ENCODE measurements at regions of chr1 and their contacts with region 1.

Region 1: DNA sequence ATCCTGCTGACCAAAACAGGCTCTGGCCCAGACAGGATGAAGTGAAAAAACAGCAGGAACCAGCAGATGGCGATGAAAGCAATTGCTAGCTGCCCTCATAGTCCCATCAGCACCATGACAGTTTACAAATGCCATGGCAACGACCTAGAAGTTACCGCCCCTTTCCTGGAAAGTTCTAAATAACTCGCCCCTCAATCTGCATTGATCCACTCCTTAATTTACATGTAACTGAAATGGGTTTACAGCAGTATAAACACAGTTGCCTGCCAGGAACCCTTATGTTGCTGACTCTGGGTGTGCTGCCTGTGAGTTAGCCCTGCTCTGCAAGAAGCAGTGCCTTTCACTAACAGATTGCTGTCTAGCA is 65.5 kb upstream of the CR1L start:
- DNase-seq: peak; percentile 67
- ATAC-seq: peak; percentile 90
- H3K4me3 Mint-ChIP-seq: no peak overlapping the region
- H3K27ac Mint-ChIP-seq: no peak overlapping the region
- H3K4me1 Mint-ChIP-seq: peaks cover 6% of the 10 kb centered on the region
- H3K27me3 Mint-ChIP-seq: peaks cover 25% of the 10 kb centered on the region

Region 2: DNA sequence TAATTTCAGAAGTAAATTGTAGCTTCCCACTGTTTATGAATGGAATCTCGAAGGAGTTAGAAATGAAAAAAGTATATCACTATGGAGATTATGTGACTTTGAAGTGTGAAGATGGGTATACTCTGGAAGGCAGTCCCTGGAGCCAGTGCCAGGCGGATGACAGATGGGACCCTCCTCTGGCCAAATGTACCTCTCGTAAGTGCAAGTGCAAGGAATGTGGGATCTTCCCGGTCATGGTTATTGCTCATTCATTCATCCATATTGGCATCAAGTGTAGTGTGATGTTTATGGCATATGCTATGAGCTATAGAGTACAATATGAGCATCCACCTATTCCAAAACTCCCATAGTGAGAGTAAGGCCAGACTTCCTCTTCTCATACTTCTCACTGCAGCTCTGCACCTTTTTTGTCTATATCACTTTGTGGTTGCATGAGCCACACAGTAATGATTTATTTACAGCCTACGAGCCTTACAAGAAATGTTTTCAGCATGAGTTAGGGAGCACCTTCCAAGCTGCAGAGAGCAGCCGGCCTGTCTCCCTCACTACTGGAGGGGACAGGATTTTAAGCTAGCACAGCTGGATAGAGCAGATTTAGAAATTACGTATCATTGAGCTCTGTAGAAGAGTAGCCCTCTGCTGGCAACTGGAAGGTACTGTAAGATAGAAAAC is 40.6 kb after region 1 on chr1:
- CTCF ChIA-PET with region 1: interaction called, 12 read pairs
- POLR2A ChIA-PET with region 1: no interaction called
- DNase-seq: peak; percentile 40
- ATAC-seq: peak; percentile 91
- H3K4me3 Mint-ChIP-seq: no peak overlapping the region
- H3K27ac Mint-ChIP-seq: no peak overlapping the region
- H3K4me1 Mint-ChIP-seq: peaks cover 2% of the 10 kb centered on the region
- H3K27me3 Mint-ChIP-seq: no peaks in the 10 kb centered on the region

Region 3: GRCh38 chr1:207672522-207673130 is 93.2 kb after region 1 on chr1:
- CTCF ChIA-PET with region 1: interaction called, 13 read pairs
- POLR2A ChIA-PET with region 1: no interaction called
- DNase-seq: no peak
- ATAC-seq: no peak
- H3K4me3 Mint-ChIP-seq: no peak overlapping the region
- H3K27ac Mint-ChIP-seq: no peak overlapping the region
- H3K4me1 Mint-ChIP-seq: no peaks in the 10 kb centered on the region
- H3K27me3 Mint-ChIP-seq: peaks cover 55% of the 10 kb centered on the region

Measured in activated CD8-positive, alpha-beta T cell treated with anti-CD3 and anti-CD28 coated beads, Interleukin-2, amount 10 ng/mL, durations not matched to agents 7 days and 5 days (primary cell).